Panc1 (cell line): ENCODE measurements at regions of chr14 and their contacts with region 1.

Region 1: DNA sequence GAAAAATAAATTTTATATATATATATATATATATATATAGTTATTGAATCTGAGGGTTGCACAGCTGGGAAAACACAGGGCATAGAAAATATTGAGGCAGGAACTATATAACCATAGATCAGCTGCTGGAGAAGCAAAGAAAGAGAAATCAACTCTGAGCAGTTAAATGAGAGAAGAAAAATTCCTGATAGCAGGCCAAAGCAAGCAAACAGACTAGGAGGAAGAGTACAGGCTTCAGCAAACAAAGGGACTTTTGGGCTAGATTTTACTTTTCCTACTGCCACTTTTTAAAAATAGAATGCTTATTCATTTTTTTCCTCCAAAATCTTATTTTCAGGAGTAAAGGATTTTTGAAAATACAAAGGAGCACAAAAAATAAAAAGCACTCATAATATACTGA is 216.0 kb upstream of the PRKD1 start:
- DNase-seq: no peak
- ATAC-seq: no peak
- H3K4me3 ChIP-seq: no peak overlapping the region
- H3K27ac ChIP-seq: no peak overlapping the region
- H3K4me1 ChIP-seq: no peaks in the 10 kb centered on the region
- H3K27me3 ChIP-seq: no peaks in the 10 kb centered on the region
- CTCF ChIP-seq: no peak

Region 2: DNA sequence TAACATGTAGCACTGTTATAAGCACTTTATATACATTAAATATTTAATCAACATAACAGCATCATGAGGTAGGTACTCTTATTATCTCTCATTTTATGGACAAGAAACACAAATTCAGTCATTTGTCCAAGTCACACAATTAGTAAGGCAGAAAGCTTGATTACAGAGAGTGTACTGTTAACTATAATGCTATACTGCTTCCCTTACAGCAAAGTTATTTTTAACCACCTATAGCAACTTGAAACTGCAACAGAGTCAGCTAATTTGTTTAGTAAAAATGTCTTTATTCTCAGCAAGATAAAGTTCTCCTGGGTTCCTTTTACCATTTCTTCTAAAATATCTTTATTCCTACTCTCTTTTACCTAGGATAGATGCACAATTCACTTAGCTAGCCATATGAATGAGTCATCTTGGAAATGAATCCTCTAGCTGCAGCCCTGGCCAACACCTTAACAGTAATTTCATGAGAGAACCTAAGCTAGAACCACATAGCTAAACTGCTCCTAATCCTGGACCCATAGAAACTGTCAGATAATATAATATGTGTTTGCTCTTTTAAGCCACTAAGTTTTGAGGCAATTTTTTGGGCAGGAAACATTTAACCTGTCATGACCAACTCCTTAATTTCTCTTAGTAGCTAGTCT is 1154.2 kb after region 1 on chr14:
- CTCF ChIA-PET with region 1: no interaction called
- POLR2A ChIA-PET with region 1: interaction called, 15 read pairs
- in situ Hi-C with region 1: no loop called
- intact Hi-C with region 1: no loop called
- DNase-seq: no peak
- ATAC-seq: no peak
- H3K4me3 ChIP-seq: no peak overlapping the region
- H3K27ac ChIP-seq: no peak overlapping the region
- H3K4me1 ChIP-seq: no peaks in the 10 kb centered on the region
- H3K27me3 ChIP-seq: no peaks in the 10 kb centered on the region
- CTCF ChIP-seq: no peak